AG04450 (cell line): ENCODE measurements at regions of chr15 and their contacts with region 1.

Region 1: GRCh38 chr15:84928843-84929168 is 44.3 kb downstream of the SLC28A1 start:
- DNase-seq: no peak
- H3K4me3 ChIP-seq: no peak overlapping the region
- H3K27ac ChIP-seq: no peak overlapping the region
- H3K27me3 ChIP-seq: no peaks in the 10 kb centered on the region
- CTCF ChIP-seq: no peak

Region 2: DNA sequence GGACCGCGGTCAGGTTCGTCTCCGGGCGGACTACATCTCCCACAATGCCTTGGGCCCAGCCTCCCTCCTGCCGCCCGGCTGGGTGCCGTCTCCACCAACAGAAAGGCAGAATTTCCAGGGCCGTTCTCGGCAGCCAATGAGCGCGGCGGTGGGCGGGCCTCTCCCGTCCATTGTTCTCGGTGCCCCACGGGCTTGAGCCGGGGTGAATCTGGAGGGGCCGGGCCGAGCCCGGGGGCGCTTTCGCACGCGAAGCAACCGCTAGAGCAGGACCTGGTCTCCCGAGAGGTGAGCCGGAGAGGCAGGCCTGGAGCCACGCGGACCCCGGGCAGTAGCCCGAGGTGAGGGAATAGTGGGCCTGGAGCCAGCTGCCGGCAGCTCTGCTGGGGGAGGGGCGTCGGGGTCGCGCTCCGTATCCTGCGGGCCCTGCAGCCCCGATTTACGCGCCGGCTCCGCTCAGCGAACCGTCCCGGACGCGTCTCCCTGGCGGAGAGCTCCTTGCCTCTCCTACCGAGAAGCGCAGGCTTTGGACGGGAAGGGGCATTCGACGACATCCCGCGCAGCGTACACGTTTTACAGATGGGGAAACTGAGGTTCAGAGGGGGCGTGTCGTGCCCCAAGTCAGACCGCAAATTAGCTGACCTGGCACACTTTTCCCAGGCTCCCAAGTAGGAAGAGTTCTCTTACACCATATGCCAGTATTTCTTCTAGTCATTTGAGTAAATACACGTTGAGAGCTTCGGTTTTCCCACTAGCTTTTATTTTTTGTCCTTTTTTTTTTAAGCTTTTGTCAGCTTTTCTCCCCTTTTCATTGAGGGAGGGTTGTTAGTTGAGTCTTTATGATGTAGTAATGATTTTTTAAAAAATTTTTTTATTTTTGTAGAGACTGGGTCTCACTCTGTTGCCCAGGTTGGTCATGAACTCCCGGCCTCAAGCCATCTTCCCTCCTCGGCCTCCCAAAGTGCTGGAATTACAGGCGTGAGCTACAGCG is 327.7 kb before region 1 on chr15 and contains the start of gene ZSCAN2:
- CTCF ChIA-PET with region 1: interaction called, 15 read pairs
- POLR2A ChIA-PET with region 1: no interaction called
- DNase-seq: peak; percentile 77
- H3K4me3 ChIP-seq: peak within 1 kb of the TSS; percentile 99
- H3K27ac ChIP-seq: peak within 1 kb of the TSS; percentile 68
- H3K27me3 ChIP-seq: peaks cover under 1% of the 10 kb centered on the region
- CTCF ChIP-seq: no peak
- polyA plus RNA-seq, gene ZSCAN2: 16.2 and 17.0 TPM in 2 replicates

Region 3: DNA sequence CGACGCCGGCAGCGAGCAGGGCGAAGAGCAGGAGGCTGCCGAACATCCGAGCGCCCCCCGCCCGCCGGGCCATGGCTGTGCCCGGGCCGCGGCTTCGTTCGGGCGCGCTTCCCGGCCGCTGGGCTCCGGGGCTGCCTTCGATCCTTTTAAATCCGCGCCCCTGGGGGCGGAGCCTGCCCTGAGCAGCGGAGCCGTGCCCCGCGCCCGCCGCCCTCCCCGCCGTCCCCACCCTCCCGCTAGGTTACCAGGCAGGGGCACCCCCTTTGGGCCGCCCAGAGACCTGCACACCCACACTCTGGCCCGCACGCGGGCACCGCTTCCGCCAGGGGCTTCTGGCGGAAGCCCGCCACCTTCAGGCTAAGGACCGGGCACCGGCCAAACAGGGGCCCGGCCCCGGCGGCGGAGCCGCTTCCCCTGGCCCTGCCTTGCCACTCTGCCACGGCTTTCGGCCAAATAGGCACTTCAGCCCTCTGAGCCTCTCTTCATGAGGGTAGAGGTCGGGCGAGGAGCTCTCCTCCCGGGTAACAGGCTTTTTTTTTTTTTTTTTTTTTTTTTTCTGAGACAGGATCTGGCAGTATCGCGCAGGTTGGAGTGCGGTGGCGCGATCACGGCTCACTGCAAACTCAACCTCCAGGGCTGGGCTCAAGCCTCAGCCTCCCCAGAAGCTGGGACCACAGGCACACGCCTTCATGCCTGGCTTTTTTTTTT is 270.6 kb before region 1 on chr15 and contains the start of gene NMB:
- CTCF ChIA-PET with region 1: interaction called, 16 read pairs
- POLR2A ChIA-PET with region 1: interaction called, 7 read pairs
- DNase-seq: no peak
- H3K4me3 ChIP-seq: peak within 1 kb of the TSS; percentile 58
- H3K27ac ChIP-seq: peak within 1 kb of the TSS; percentile 73
- H3K27me3 ChIP-seq: no peaks in the 10 kb centered on the region
- CTCF ChIP-seq: peak; percentile 72
- polyA plus RNA-seq, gene NMB: 3.3 and 3.8 TPM in 2 replicates

Region 4: DNA sequence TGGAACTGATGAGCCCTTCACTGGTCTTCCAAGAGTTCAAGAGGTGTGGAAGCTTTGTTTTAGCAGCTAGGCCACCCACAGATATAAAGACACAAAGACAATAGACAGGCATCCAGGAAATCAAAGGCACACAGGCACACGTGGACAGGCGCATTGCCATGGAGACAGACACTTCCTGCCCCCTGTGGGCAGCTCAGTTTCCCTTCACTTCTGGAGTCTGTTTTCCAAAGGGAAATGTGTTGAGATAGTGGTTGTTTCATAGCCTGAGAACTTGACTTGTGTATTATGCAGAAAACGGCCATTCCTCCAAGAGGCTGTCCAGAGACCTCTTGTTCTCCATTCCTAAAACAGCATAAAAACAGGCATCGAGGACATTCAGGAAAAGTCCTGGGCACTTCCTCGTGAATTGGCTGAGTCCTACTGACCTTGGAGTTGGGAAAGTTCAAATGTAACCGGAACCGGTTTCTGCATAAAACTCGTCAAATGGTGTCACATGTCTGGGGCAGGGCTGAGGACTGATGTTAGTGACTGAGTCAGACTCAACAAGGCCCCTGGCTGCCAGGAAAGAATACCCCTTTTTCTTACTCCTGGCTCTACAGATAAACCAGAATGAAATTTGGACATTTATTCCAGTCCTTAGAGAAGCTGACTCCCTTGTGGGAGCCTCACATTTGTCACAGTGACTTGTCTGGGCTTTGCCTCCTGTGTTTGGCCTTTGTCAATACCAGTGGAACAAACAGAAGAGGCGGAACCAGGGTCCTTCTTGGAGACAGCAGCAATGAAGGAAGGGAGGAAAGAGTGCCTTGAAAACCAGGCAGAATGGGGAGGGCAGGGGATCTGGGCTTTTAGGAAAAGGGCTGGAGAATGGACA is 110.3 kb before region 1 on chr15:
- CTCF ChIA-PET with region 1: no interaction called
- POLR2A ChIA-PET with region 1: no interaction called
- DNase-seq: no peak
- H3K4me3 ChIP-seq: no peak overlapping the region
- H3K27ac ChIP-seq: no peak overlapping the region
- H3K27me3 ChIP-seq: peaks cover 3% of the 10 kb centered on the region
- CTCF ChIP-seq: no peak

Region 5: DNA sequence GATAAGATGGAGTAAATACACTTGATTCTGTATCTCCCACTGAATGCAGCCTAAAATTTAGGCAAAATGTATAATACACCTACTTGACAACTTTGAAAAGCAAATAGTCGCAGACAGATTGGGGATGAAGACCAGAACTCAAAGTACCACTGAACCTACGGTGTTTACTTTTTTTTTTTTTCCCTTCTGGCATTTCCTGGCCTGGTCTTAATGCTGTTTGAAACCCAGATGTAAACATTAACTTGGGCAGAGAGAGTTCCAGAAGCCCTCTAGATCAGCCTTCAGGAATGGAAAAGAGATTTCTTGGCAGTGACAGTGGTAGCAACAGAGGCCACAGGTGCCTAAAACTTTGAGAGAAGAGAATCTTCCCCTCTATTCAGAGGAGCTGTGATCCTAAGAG is 83.8 kb before region 1 on chr15:
- CTCF ChIA-PET with region 1: interaction called, 14 read pairs
- POLR2A ChIA-PET with region 1: no interaction called
- DNase-seq: no peak
- H3K4me3 ChIP-seq: no peak overlapping the region
- H3K27ac ChIP-seq: no peak overlapping the region
- H3K27me3 ChIP-seq: no peaks in the 10 kb centered on the region
- CTCF ChIP-seq: no peak

Region 6: GRCh38 chr15:84911879-84912660 is 16.7 kb before region 1 on chr15:
- CTCF ChIA-PET with region 1: interaction called, 14 read pairs
- POLR2A ChIA-PET with region 1: no interaction called
- DNase-seq: peak; percentile 87
- H3K4me3 ChIP-seq: no peak overlapping the region
- H3K27ac ChIP-seq: peak overlapping the region; percentile 97
- H3K27me3 ChIP-seq: no peaks in the 10 kb centered on the region
- CTCF ChIP-seq: no peak

Region 7: DNA sequence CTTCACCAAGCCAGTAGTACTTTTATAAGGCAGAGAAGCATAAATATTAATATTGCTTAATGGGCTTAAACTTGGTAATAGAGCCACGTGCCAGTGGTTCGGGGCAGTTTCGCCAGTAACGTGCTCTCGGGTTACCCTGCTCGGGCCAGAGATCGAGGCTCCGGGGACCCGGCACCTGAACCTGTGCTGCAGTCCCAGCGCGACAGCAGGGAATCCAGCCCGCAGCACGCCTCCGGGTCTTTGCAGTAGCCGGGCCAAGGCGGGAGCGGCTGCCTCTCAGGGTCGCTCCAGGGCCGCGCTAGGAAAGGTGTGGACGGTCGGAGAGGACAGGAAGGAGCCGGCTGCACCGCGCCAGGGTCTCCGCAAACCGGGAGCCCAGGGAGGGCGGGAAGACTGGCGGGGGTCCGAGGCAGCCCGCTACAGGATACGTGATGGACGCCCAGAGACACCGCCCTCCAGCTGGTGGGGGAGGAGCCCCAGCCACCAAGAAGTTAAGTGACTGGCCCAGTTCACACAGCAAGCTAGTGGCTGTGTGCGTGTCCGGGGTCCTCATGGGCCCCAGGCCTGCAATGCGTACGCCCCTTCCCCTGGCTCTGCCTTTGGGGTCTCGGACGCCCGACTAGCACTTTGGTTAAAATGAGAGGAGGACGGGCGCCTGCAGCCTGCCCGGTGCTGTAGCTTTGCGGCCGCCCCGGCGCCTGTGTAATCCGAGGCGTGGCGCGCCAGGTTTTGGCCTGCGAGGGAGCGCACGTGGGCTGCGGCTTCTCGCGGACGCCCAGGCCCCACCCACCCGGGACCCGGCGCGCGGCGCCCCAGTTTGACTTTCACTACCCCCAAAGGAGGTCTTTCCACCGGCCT is 51.6 kb after region 1 on chr15:
- CTCF ChIA-PET with region 1: no interaction called
- POLR2A ChIA-PET with region 1: no interaction called
- DNase-seq: peak; percentile 54
- H3K4me3 ChIP-seq: peak overlapping the region; percentile 90
- H3K27ac ChIP-seq: peak overlapping the region; percentile 96
- H3K27me3 ChIP-seq: no peaks in the 10 kb centered on the region
- CTCF ChIP-seq: no peak

Region 8: DNA sequence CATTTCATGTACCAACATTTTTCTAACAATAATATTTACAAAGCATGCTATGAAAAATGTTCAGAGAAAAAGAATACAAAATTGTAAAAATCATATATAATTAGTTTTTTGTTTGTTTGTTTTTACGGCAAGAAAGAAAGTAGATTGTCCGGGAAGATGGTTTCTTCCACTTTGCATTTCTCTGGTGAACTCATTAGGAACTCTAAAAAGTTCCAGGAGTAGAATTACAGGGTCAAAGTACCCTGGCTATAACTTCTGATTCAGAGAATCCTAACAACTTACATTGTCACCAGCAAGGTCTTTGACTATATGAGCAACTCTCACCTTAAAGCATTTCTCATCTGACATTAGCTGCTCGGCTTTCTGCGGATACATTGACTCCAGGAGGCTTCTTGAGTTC is 249.5 kb after region 1 on chr15:
- CTCF ChIA-PET with region 1: no interaction called
- POLR2A ChIA-PET with region 1: no interaction called
- DNase-seq: no peak
- H3K4me3 ChIP-seq: no peak overlapping the region
- H3K27ac ChIP-seq: no peak overlapping the region
- H3K27me3 ChIP-seq: peaks cover 5% of the 10 kb centered on the region
- CTCF ChIP-seq: no peak